ENCODE measurements at regions of chr17 and their contacts with region 1.

Region 1: GRCh38 chr17:41648411-41649195 is 24.2 kb upstream of the KRT17 start:
- DNase-seq: peak; percentile 85
- ATAC-seq: peak; percentile 91
- H3K4me3 Mint-ChIP-seq: peak overlapping the region; percentile 79
- H3K27ac Mint-ChIP-seq: peak overlapping the region; percentile 54
- H3K4me1 Mint-ChIP-seq: peaks cover 10% of the 10 kb centered on the region
- H3K27me3 Mint-ChIP-seq: no peaks in the 10 kb centered on the region
- CTCF ChIP-seq: peak; percentile 88

Region 2: DNA sequence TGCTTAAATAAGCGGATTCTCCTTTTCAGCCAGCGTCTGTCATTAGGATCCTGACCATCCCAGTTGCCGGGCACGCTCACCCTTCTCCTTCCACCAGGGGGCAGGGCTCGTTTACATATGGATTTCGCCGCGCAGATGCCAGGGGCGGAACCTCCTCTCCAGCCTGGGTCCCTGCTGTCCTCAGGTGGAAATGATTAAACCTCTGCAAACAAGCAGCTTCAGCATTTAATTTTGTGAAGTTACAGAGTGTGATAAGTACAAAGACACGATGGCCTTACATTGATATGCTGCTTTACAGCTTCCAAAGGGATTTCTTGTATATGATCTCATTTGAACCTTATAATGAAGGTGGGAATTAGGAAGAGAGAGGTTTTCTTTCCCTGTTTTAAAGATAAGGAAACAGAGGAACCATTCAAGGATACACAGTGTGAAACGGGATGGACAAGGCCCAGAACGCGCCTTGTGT is 845.0 kb before region 1 on chr17:
- CTCF ChIA-PET with region 1: interaction called, 6 read pairs
- POLR2A ChIA-PET with region 1: no interaction called
- intact Hi-C with region 1: loop called (anchors 1 kb)
- DNase-seq: peak; percentile 54
- ATAC-seq: peak; percentile 94
- H3K4me3 Mint-ChIP-seq: no peak overlapping the region
- H3K27ac Mint-ChIP-seq: no peak overlapping the region
- H3K4me1 Mint-ChIP-seq: peaks cover 3% of the 10 kb centered on the region
- H3K27me3 Mint-ChIP-seq: peaks cover 51% of the 10 kb centered on the region
- CTCF ChIP-seq: peak; percentile 44

Region 3: DNA sequence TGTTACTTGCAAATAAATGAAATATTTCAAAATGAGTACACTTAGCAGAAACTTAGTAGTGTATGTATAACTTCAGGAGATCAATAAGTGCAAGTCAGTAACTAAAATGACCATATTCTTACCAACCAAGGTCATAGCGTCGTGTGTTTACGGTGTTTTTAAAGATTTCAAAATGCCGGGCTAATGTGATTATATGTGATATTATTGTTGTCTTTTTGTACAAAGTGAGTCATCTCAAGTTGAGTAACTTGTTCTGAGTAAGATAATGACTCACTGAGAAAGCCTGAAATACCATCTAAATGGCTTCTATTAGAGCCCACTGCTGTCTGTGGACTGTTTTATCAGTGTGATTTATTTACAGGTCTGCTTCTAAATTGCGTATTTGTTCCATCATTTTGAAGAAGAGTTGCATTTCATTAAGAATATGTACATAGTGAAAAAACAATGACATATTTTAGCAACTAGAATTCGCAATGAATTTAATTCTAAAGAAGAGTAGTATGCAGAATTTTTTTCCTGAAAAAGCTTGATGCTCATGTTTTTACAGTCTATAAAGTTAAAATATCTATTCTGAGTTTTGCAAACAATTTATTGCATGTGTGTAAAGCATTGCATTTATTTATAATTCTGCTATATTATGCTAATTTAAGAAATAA is 794.3 kb before region 1 on chr17:
- CTCF ChIA-PET with region 1: interaction called, 8 read pairs
- POLR2A ChIA-PET with region 1: no interaction called
- intact Hi-C with region 1: loop called (anchors 1 kb)
- DNase-seq: no peak
- ATAC-seq: no peak
- H3K4me3 Mint-ChIP-seq: no peak overlapping the region
- H3K27ac Mint-ChIP-seq: no peak overlapping the region
- H3K4me1 Mint-ChIP-seq: no peaks in the 10 kb centered on the region
- H3K27me3 Mint-ChIP-seq: peaks cover 20% of the 10 kb centered on the region
- CTCF ChIP-seq: no peak

Region 4: GRCh38 chr17:41322094-41322902 is 326.3 kb before region 1 on chr17:
- CTCF ChIA-PET with region 1: interaction called, 5 read pairs
- POLR2A ChIA-PET with region 1: no interaction called
- intact Hi-C with region 1: loop called (anchors 5 kb)
- DNase-seq: no peak
- ATAC-seq: peak; percentile 67
- H3K4me3 Mint-ChIP-seq: no peak overlapping the region
- H3K27ac Mint-ChIP-seq: no peak overlapping the region
- H3K4me1 Mint-ChIP-seq: no peaks in the 10 kb centered on the region
- H3K27me3 Mint-ChIP-seq: no peaks in the 10 kb centered on the region
- CTCF ChIP-seq: no peak

Region 5: DNA sequence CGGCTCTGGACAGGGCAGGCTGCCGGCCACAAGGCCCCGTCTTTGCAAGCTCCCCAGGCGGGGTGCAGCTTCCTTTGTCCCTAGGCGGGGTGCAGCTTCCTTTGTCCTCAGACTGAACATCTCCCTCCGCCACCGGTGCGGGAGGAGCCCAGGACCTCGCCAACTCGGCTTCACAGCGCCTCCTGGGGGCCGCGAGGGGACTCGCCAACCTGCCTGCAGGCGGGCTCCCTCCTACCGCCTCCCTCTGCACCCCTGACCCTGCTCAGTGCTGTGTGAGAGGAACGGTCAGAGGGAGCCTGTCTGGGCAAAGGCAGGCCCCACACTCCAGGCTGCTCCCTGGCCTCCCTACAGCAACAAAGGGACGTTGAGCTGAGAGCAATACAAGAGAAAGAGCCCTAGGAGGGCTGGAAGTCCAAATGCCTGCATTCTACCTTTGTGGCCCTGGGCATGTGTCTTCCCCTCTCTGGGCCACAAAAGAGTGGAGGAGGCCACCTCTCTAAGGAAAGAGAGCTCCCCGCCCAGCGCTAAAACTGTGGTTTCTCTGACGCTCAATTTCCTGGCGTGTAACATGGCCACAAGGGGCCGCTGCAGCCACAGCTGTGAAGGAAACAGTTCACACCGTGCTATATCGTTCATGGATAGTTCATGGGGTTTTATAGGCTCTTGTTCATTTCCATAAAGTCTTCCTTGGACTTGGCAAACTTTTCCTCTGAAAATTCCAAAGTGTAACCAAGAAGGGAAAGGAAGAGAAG is 99.6 kb before region 1 on chr17:
- CTCF ChIA-PET with region 1: interaction called, 29 read pairs
- POLR2A ChIA-PET with region 1: interaction called, 6 read pairs
- intact Hi-C with region 1: loop called (anchors 1 kb)
- DNase-seq: peak; percentile 50
- ATAC-seq: peak; percentile 87
- H3K4me3 Mint-ChIP-seq: peak overlapping the region; percentile 44
- H3K27ac Mint-ChIP-seq: no peak overlapping the region
- H3K4me1 Mint-ChIP-seq: peaks cover 8% of the 10 kb centered on the region
- H3K27me3 Mint-ChIP-seq: peaks cover 39% of the 10 kb centered on the region
- CTCF ChIP-seq: no peak

Region 6: DNA sequence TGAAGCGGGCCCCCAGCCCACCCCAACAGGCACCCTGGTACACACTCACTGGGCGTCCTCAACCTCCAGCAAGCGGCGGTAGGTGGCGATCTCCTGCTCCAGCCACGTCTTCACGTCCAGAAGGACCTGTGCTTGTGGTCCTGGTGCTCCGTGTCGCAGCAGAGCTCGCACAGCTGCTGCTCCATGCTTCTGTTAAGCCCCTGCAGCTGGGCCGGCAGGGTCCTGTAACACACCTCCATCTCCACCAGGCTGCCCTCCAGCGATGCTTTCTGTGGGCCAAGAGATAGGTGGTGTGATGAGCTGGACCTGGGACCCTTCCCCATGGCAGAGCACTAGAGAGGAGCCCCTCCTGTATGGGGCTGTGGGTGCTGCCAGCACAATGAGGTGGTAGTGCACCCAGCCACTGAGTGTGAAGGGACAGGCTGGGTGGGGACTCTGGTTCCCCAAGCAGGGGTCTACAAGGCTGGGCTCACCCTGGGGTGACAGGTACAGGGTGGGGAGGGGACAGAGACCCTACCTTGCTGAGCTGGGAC is 20.7 kb before region 1 on chr17:
- CTCF ChIA-PET with region 1: no interaction called
- POLR2A ChIA-PET with region 1: no interaction called
- intact Hi-C with region 1: no loop called
- DNase-seq: no peak
- ATAC-seq: no peak
- H3K4me3 Mint-ChIP-seq: no peak overlapping the region
- H3K27ac Mint-ChIP-seq: no peak overlapping the region
- H3K4me1 Mint-ChIP-seq: no peaks in the 10 kb centered on the region
- H3K27me3 Mint-ChIP-seq: peaks cover 13% of the 10 kb centered on the region
- CTCF ChIP-seq: no peak

Measured in activated B cell treated with CpG ODN at 0.5 μM for 24 hours (primary cell).